MCF 10A (cell line): ENCODE measurements at regions of chr1 and their contacts with region 1.

Region 1: GRCh38 chr1:113759333-113760101 is at the start of gene PHTF1:
- DNase-seq: peak; percentile 69
- H3K4me3 Mint-ChIP-seq: peak within 1 kb of the TSS; percentile 73
- H3K27ac Mint-ChIP-seq: peak within 1 kb of the TSS; percentile 73
- H3K4me1 Mint-ChIP-seq: peaks cover 13% of the 10 kb centered on the region
- H3K27me3 Mint-ChIP-seq: no peaks in the 10 kb centered on the region
- CTCF ChIP-seq: no peak
- total RNA-seq, gene PHTF1: 8.4 and 13.0 TPM in 2 replicates

Region 2: DNA sequence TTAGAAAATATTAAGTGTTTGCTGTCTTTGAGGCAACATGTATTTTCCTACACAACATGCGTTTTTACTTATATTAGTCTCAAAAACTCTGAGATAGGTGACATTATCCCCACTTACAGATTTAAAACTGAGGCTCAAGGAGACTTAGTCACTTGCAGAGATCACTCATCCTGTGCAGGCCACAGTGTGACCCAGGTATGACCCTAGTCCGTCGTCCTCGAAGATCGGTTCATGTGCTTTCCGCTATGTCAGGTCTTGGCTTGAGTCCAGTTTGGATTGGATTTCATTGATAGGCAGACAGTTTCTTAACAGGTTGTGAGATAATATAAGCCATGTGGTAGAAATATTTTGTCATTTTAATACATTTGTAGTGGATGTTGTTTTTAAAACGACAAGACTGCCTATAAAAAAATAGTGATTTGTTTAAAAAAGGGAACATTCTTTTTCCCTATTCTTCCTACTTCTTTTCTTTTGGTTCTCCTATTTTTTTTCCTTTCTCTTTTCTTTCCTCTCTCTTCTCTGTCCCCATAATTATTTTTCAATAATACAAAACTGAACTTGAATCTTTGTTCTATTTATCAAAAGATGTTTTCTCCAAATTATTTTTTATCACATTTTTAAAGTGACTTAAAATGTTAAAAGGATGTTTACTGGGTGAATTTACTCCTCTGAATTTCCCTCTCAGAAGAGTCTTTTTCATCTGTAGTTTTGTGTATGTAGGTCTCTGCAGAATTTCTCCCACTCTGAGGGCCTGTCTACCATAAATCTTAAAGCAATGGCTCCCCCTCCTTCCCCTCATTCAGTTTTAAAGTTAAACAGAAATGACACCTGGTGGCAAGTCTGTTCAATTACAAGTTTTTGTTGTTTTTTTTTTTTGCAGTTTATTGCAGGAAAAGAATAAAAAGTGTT is 82.0 kb before region 1 on chr1:
- CTCF ChIA-PET with region 1: no interaction called
- POLR2A ChIA-PET with region 1: no interaction called
- intact Hi-C with region 1: no loop called
- DNase-seq: peak; percentile 52
- H3K4me3 Mint-ChIP-seq: no peak overlapping the region
- H3K27ac Mint-ChIP-seq: peak overlapping the region; percentile 61
- H3K4me1 Mint-ChIP-seq: peaks cover 16% of the 10 kb centered on the region
- H3K27me3 Mint-ChIP-seq: no peaks in the 10 kb centered on the region
- CTCF ChIP-seq: peak; percentile 50

Region 3: GRCh38 chr1:113747376-113747775 is 12.1 kb before region 1 on chr1:
- CTCF ChIA-PET with region 1: interaction called, 3 read pairs
- POLR2A ChIA-PET with region 1: interaction called, 12 read pairs
- intact Hi-C with region 1: no loop called
- DNase-seq: no peak
- H3K4me3 Mint-ChIP-seq: no peak overlapping the region
- H3K27ac Mint-ChIP-seq: no peak overlapping the region
- H3K4me1 Mint-ChIP-seq: peaks cover 20% of the 10 kb centered on the region
- H3K27me3 Mint-ChIP-seq: no peaks in the 10 kb centered on the region
- CTCF ChIP-seq: no peak

Region 4: GRCh38 chr1:113811888-113812660 is 52.6 kb after region 1 on chr1 and contains the start of gene RSBN1:
- CTCF ChIA-PET with region 1: interaction called, 4 read pairs
- POLR2A ChIA-PET with region 1: interaction called, 21 read pairs
- intact Hi-C with region 1: loop called (anchors 2 kb)
- DNase-seq: peak; percentile 99
- H3K4me3 Mint-ChIP-seq: peak within 1 kb of the TSS; percentile 94
- H3K27ac Mint-ChIP-seq: peak within 1 kb of the TSS; percentile 88
- H3K4me1 Mint-ChIP-seq: peaks cover 22% of the 10 kb centered on the region
- H3K27me3 Mint-ChIP-seq: no peaks in the 10 kb centered on the region
- CTCF ChIP-seq: no peak
- total RNA-seq, gene RSBN1: 11.8 and 15.7 TPM in 2 replicates

Region 5: GRCh38 chr1:113998327-113998726 is 238.8 kb after region 1 on chr1:
- CTCF ChIA-PET with region 1: no interaction called
- POLR2A ChIA-PET with region 1: no interaction called
- intact Hi-C with region 1: no loop called
- DNase-seq: no peak
- H3K4me3 Mint-ChIP-seq: no peak overlapping the region
- H3K27ac Mint-ChIP-seq: no peak overlapping the region
- H3K4me1 Mint-ChIP-seq: peaks cover 5% of the 10 kb centered on the region
- H3K27me3 Mint-ChIP-seq: no peaks in the 10 kb centered on the region
- CTCF ChIP-seq: no peak